Gastrocnemius medialis (tissue), 4 donors: ENCODE measurements at regions of chr11 and their contacts with region 1.

Region 1: GRCh38 chr11:102346748-102347461 is at the start of gene BIRC2:
- DNase-seq: peak; percentile 85 to 90
- ATAC-seq: peak; percentile 93
- H3K4me3 ChIP-seq: peak within 1 kb of the TSS; percentile 61 to 99 (median 90)
- H3K27ac ChIP-seq: peak within 1 kb of the TSS; percentile 93 to 100 (median 98)
- H3K4me1 ChIP-seq: peaks cover 20 to 24% of the 10 kb centered on the region in 2 donors
- H3K27me3 ChIP-seq: no peaks in the 10 kb centered on the region
- CTCF ChIP-seq: peak; percentile 77 to 85 (median 83)
- POLR2A ChIP-seq: peak; percentile 81 to 83
- total RNA-seq, gene BIRC2: 30.7 to 60.3 (median 46.6) TPM

Region 2: GRCh38 chr11:102109896-102110760 is 236.8 kb before region 1 on chr11 and contains the start of gene YAP1:
- in situ Hi-C with region 1: no loop called
- intact Hi-C with region 1: loop called (anchors 2 kb)
- DNase-seq: peak; percentile 78 to 91
- ATAC-seq: peak; percentile 75 to 79
- H3K4me3 ChIP-seq: peak within 1 kb of the TSS; percentile 79 to 96 (median 82)
- H3K27ac ChIP-seq: peak within 1 kb of the TSS; percentile 93 to 99 (median 98)
- H3K4me1 ChIP-seq: peaks cover 25 to 35% of the 10 kb centered on the region in 2 donors
- H3K27me3 ChIP-seq: no peaks in the 10 kb centered on the region
- CTCF ChIP-seq: peak in 2 of 5 experiments; percentile 5 to 13
- POLR2A ChIP-seq: peak; percentile 60 to 75
- total RNA-seq, gene YAP1: 41.9 to 89.4 (median 72.6) TPM

Region 3: DNA sequence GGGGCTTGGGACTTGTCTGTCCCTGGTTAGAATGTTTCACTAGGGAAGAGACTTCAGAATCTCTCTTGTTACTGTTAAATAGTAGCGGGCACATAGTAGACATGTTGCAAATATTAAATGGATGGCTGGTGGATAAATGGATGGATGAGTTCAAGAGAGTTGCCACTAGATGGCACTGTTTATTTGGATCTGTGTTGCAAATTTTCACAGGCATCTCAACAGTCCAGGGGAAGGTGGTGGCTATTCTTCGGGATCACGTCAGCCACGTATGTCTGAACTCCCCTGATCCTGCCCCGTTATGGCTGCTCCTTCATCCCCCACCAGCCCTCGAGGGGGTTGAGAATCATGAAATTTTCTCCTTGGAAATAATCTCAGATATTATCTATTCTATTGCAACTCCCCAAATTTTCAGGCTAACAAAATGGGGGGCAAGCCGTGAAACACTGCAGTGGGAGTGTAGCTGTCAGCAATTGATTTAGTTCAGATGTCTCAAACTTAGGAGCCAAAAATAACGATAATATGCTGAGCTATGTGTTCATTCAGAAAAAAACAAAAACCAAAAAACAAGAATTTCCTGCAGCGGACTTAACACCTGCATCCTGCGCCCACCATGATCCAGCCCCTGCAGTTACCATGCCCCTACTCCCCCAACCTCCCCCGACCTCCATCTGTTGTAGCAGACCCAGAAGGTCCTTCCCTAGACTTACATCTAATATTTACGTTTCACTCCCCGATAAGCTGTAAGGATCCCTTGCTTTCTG is 58.8 kb before region 1 on chr11:
- in situ Hi-C with region 1: loop called in 2 of 4 experiments (anchors 10 kb)
- intact Hi-C with region 1: loop called (anchors 2 kb)
- DNase-seq: no peak
- ATAC-seq: peak; percentile 78 to 90
- H3K4me3 ChIP-seq: no peak overlapping the region
- H3K27ac ChIP-seq: no peak overlapping the region
- H3K4me1 ChIP-seq: no peaks in the 10 kb centered on the region
- H3K27me3 ChIP-seq: no peaks in the 10 kb centered on the region
- CTCF ChIP-seq: peak; percentile 62 to 78 (median 68)
- POLR2A ChIP-seq: no peak

Region 4: DNA sequence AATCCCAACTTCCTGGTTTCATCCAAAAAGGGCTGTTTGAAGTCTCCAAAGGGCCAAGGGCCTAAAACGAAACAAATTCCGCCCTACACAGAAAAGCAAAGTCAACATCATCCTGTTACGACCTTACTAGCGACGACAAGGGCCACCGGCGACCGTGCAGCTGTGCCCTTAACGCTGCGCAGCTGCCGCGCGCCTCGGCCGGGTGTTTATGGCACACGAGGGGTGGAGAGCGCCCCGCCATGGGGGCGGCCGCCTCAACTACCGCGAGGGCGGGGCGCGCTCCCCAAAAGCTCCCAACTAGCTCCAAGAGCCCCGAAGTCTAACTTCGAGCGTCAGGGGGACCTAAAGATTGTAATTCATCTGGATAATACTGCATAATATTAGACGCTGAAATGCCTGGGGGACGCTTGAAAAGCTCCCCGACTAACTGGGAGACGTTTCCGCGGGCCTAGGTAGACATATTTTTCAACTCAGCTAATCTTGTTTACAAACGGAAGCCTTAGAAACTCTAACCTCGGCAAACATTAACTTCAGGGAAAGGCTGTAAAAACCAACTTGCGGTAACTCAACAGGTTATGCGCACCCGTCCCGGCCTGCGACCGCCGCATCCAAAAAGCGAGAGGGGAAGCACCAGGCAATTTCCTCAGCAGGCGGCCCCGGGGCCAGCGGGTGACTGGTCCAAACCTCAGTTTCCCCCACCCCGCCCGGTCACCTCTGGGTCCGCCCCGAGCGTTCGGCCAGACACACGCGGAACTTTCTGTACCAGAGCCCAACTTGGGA is 105.0 kb after region 1 on chr11:
- in situ Hi-C with region 1: no loop called
- intact Hi-C with region 1: loop called (anchors 2 kb)
- DNase-seq: peak; percentile 17 to 26
- ATAC-seq: peak; percentile 52
- H3K4me3 ChIP-seq: peak overlapping the region; percentile 58 to 91 (median 82)
- H3K27ac ChIP-seq: peak overlapping the region; percentile 78 to 80 (median 79)
- H3K4me1 ChIP-seq: peaks cover 10 to 13% of the 10 kb centered on the region in 2 donors
- H3K27me3 ChIP-seq: no peaks in the 10 kb centered on the region
- CTCF ChIP-seq: peak in 1 of 5 experiments; percentile 16
- POLR2A ChIP-seq: peak in 1 of 2 donors; percentile 41